CD4-positive, alpha-beta memory T cell (primary cell): ENCODE measurements at regions of chr12 and their contacts with region 1.

Region 1: GRCh38 chr12:127108360-127109215 is 1158.4 kb upstream of the TMEM132C start:
- DNase-seq: peak in 4 of 5 donors; percentile 26 to 41 (median 30)
- H3K4me3 ChIP-seq: no peak overlapping the region
- H3K4me3 Mint-ChIP-seq: no peak overlapping the region
- H3K27ac ChIP-seq: no peak overlapping the region
- H3K27ac Mint-ChIP-seq: no peak overlapping the region
- H3K4me1 ChIP-seq: no peaks in the 10 kb centered on the region
- H3K4me1 Mint-ChIP-seq: no peaks in the 10 kb centered on the region
- H3K27me3 ChIP-seq: no peaks in the 10 kb centered on the region
- H3K27me3 Mint-ChIP-seq: peaks cover 11 to 21% of the 10 kb centered on the region in 2 donors

Region 2: GRCh38 chr12:127119600-127120140 is 11.1 kb after region 1 on chr12:
- CTCF ChIA-PET with region 1: interaction called, 10 read pairs
- POLR2A ChIA-PET with region 1: no interaction called
- intact Hi-C with region 1: no loop called
- DNase-seq: no peak
- H3K4me3 ChIP-seq: no peak overlapping the region
- H3K4me3 Mint-ChIP-seq: no peak overlapping the region
- H3K27ac ChIP-seq: no peak overlapping the region
- H3K27ac Mint-ChIP-seq: no peak overlapping the region
- H3K4me1 ChIP-seq: no peaks in the 10 kb centered on the region
- H3K4me1 Mint-ChIP-seq: no peaks in the 10 kb centered on the region
- H3K27me3 ChIP-seq: no peaks in the 10 kb centered on the region
- H3K27me3 Mint-ChIP-seq: peaks cover 15% of the 10 kb centered on the region in 2 donors

Region 3: DNA sequence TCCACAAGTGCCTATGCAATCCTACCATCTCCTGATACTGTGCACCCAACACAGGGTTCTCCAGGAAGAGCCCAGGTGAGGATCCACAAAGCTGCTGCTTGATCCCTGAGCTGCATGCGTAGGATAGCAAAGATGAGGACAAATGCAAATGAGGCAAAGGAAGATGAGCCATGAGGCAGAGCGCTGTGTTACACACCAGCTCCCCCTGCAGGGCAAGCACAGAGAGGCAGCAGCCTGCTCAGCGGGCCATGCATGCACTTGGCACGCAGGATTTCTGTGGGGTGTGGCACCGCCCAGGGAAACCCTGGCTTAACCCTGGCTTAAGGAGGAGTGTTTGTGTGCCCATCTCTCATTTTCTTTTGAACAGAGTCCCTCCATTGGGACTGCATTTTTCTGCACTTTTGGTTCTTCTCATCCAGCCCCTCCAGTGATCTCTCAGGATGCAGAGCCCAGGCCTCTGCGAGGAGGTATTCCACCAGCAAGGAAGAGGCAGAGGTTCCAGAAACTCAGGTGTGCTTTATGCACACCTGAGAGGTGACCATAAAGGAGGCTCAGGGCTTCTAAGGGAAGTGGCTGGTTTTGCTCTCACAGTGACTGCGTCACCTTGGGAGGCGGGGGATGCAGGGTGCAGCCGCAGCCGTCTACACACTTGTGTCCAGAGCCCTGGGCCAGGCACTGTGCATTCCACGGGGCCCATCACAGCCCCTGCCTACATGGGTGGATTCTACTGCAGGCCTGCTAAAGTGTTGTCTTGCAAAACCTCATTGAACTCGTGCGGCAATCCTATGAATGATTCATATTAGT is 185.1 kb after region 1 on chr12:
- CTCF ChIA-PET with region 1: interaction called, 25 read pairs
- POLR2A ChIA-PET with region 1: no interaction called
- intact Hi-C with region 1: loop called (anchors 1 kb)
- DNase-seq: peak in 4 of 5 donors; percentile 4 to 33 (median 24)
- H3K4me3 ChIP-seq: no peak overlapping the region
- H3K4me3 Mint-ChIP-seq: no peak overlapping the region
- H3K27ac ChIP-seq: no peak overlapping the region
- H3K27ac Mint-ChIP-seq: no peak overlapping the region
- H3K4me1 ChIP-seq: no peaks in the 10 kb centered on the region
- H3K4me1 Mint-ChIP-seq: no peaks in the 10 kb centered on the region
- H3K27me3 ChIP-seq: no peaks in the 10 kb centered on the region
- H3K27me3 Mint-ChIP-seq: peaks cover 2% of the 10 kb centered on the region in 2 donors

Region 4: GRCh38 chr12:127381048-127381668 is 272.6 kb after region 1 on chr12:
- CTCF ChIA-PET with region 1: interaction called, 22 read pairs
- POLR2A ChIA-PET with region 1: no interaction called
- intact Hi-C with region 1: no loop called
- DNase-seq: peak in 4 of 5 donors; percentile 6 to 10 (median 8)
- H3K4me3 ChIP-seq: no peak overlapping the region
- H3K4me3 Mint-ChIP-seq: no peak overlapping the region
- H3K27ac ChIP-seq: no peak overlapping the region
- H3K27ac Mint-ChIP-seq: no peak overlapping the region
- H3K4me1 ChIP-seq: peaks cover 5% of the 10 kb centered on the region
- H3K4me1 Mint-ChIP-seq: peaks cover 0 to 4% (median 0%) of the 10 kb centered on the region in 4 donors
- H3K27me3 ChIP-seq: no peaks in the 10 kb centered on the region
- H3K27me3 Mint-ChIP-seq: peaks cover 2 to 3% of the 10 kb centered on the region in 2 donors

Region 5: GRCh38 chr12:127677537-127678131 is 569.0 kb after region 1 on chr12:
- CTCF ChIA-PET with region 1: interaction called, 10 read pairs
- POLR2A ChIA-PET with region 1: no interaction called
- intact Hi-C with region 1: no loop called
- DNase-seq: peak in 4 of 5 donors; percentile 2 to 14 (median 8)
- H3K4me3 ChIP-seq: no peak overlapping the region
- H3K4me3 Mint-ChIP-seq: no peak overlapping the region
- H3K27ac ChIP-seq: no peak overlapping the region
- H3K27ac Mint-ChIP-seq: no peak overlapping the region
- H3K4me1 ChIP-seq: no peaks in the 10 kb centered on the region
- H3K4me1 Mint-ChIP-seq: peaks cover 0 to 2% (median under 1%) of the 10 kb centered on the region in 4 donors
- H3K27me3 ChIP-seq: no peaks in the 10 kb centered on the region
- H3K27me3 Mint-ChIP-seq: peaks cover 0 to 2% of the 10 kb centered on the region in 2 donors